Thyroid gland (tissue), 4 donors: ENCODE measurements at regions of chr4 and their contacts with region 1.

Region 1: DNA sequence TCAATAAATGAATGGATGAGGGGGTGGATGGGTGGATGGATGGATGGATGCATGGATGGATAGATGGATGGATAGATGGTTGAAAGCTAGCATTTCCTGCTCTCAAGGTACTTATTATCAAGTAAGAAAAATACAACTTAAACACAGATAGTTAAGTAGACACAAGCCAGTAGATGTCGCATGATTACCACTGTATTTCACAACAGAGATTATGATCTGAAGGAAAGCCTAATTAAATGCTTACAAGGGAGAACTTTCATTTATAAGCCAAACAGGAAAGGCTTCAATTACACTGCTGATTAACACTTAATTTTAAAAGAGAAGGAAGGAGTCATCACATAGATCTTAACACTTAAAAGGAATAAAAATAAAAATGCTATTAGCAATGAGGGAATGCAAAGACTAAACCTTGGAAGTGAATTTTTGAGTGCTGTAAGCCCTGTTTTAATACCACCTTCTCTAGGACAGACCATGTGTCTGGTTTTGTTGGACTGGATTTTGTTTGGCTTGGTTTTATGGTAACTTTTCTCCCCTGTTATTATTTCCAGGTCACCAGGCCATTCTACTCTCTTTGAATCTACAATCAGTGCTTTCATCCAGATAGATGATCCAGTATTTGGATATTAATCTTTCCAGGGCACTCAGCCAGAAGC is 75.4 kb upstream of the SLC39A8 start:
- DNase-seq: no peak
- H3K4me3 ChIP-seq: no peak overlapping the region
- H3K27ac ChIP-seq: no peak overlapping the region
- H3K4me1 ChIP-seq: no peaks in the 10 kb centered on the region
- H3K27me3 ChIP-seq: no peaks in the 10 kb centered on the region
- CTCF ChIP-seq: no peak
- POLR2A ChIP-seq: no peak

Region 2: GRCh38 chr4:102344954-102345794 is 75.5 kb before region 1 on chr4 and contains the start of gene SLC39A8:
- intact Hi-C with region 1: loop called (anchors 10 kb)
- DNase-seq: peak; percentile 89 to 90
- H3K4me3 ChIP-seq: peak within 1 kb of the TSS; percentile 55 to 63 (median 63)
- H3K27ac ChIP-seq: peak within 1 kb of the TSS; percentile 21 to 86 (median 76)
- H3K4me1 ChIP-seq: peaks cover 9 to 10% of the 10 kb centered on the region in 2 donors
- H3K27me3 ChIP-seq: no peaks in the 10 kb centered on the region
- CTCF ChIP-seq: peak; percentile 56 to 90 (median 78)
- POLR2A ChIP-seq: peak in 1 of 2 donors; percentile 91
- total RNA-seq, gene SLC39A8: 19.4 to 26.7 (median 23.9) TPM